ENCODE measurements at regions of chr22 and their contacts with region 1.

Region 1: DNA sequence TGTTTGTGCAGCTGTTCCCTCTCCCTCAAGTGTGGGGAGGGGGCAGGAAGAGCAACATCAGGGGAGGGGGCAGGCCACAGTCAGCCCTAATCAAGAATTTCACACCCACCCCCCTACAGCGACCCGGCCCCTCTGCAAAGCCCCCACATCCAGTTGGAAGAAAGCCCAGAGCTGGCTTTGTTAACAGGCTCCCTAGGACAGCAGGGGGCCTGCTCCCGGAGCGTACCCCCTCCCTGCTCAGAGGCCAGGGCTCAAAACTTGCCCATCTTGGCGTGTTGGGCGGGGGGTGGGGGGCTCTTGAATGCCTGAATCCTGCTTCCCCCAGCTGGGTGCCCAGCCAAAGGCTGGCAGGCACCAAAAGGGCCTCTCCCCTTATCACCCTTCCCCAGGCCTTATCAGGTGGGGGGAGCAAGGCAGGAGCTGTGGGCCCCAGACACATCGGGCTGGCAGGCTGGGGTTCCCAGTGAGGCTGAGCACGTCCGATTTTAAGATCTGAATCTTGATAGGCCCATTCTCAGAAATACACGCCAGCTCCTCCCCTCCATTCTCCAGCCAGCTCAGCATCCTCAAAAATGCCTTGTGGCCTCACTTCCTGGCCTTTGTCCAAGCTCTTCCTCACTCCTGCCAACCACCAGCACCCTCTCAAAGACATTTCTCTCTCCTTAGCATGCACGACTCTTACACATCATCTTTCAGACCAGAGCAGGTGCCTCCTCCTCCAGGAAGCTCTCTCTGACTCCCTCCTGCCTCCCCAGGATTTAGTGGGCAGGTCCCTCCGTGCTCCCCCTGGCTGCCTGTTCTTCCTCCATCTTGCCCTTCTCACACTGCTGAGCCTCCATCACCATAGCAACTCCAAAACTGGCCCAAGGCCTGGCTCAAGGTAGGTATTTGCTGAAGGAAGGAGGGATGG is 384.8 kb downstream of the MN1 start:
- DNase-seq: no peak
- ATAC-seq: no peak

Region 2: DNA sequence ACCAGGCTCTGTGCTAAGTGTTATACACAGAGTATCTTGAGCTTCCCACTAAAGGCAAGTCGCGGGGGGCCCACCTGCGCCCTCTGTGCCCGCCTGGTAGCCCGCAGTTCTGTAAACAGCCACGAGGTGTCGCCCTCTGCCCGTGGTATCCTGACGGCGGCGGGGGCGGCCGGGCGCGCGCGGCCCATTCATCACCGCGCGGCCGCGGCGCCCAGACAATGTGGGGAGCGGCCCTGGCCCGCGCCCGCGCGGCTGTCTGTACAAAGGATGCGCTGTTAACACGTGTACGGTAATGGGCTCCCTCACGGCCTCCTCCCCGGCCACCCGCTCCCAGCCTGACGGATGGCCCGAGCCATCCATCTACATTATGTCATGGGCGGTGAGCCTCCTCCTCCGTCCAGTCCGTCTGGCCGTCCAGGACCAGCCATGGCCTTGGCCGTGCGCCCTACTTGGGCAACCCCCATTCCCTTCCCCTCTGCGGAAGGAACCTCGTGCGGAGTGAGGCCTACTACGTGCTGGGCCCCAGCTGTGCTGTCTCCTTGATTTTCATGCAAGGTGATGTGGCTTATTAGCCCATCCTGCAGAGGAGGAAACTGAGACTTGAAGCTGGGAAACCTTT is 660.0 kb before region 1 on chr22:
- intact Hi-C with region 1: loop called (anchors 10 kb)
- DNase-seq: peak; percentile 83
- ATAC-seq: peak; percentile 90

Region 3: GRCh38 chr22:27370269-27370668 is 46.5 kb before region 1 on chr22:
- intact Hi-C with region 1: no loop called
- DNase-seq: no peak
- ATAC-seq: no peak

Measured in left ventricle myocardium superior (tissue), 1 donor.